CD8-positive, alpha-beta T cell (primary cell): ENCODE measurements at regions of chr22 and their contacts with region 1.

Region 1: DNA sequence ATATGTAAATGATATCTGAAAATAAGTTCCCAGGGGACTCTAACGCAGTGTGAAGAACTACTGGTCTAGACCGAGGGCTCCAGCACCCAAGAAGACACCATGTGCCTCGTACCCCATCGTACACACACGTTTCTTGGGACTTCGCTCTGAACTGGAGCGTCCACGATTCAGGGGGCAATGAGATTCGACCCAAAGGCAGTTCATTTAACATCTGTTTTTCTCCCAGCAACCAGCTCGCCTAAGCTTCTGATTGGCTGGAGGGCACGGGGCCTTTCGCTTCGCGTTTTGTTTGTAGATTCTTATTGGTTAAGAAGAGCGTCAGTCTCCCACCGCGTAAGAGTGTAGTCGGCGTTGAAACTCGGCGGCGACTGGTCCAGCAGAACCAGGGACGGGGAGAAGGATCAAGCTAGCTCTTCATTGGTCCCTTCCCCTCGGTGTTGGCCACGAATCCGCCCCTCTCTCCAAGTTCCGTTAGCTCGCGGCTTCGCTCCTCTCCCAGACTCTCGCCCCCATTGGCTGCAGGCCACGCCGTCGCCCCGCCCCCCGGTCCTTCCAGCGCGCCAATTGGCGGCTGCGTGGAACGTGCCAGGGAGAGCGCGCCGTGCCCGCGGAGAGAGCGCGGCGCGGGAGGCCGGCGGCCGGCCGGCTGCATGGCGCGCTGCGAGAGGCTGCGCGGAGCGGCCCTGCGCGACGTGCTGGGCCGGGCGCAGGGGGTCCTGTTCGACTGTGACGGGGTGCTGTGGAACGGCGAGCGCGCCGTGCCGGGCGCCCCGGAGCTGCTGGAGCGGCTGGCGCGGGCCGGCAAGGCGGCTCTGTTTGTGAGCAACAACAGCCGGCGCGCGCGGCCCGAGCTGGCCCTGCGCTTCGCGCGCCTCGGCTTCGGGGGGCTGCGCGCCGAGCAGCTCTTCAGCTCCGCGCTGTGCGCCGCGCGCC is at the start of gene PDXP:
- DNase-seq: peak; percentile 95 to 99 (median 99)
- ATAC-seq: peak; percentile 90
- H3K4me3 ChIP-seq: peak within 1 kb of the TSS; percentile 50 to 66
- H3K4me3 Mint-ChIP-seq: peak within 1 kb of the TSS; percentile 87
- H3K27ac ChIP-seq: peak within 1 kb of the TSS; percentile 8 to 76
- H3K27ac Mint-ChIP-seq: peak within 1 kb of the TSS; percentile 95
- H3K4me1 ChIP-seq: peaks cover 33% of the 10 kb centered on the region
- H3K4me1 Mint-ChIP-seq: peaks cover 37% of the 10 kb centered on the region
- H3K27me3 ChIP-seq: no peaks in the 10 kb centered on the region
- H3K27me3 Mint-ChIP-seq: no peaks in the 10 kb centered on the region
- CTCF ChIP-seq: no peak
- total RNA-seq, gene PDXP: 2.4 to 3.2 TPM

Region 2: GRCh38 chr22:37623075-37624016 is 35.1 kb before region 1 on chr22:
- CTCF ChIA-PET with region 1: interaction called, 2,176 read pairs
- POLR2A ChIA-PET with region 1: interaction called, 13 read pairs
- intact Hi-C with region 1: no loop called
- DNase-seq: peak; percentile 64 to 87 (median 79)
- ATAC-seq: peak; percentile 86
- H3K4me3 ChIP-seq: peak overlapping the region in 1 of 2 experiments; percentile 25
- H3K4me3 Mint-ChIP-seq: peak overlapping the region; percentile 68
- H3K27ac ChIP-seq: peak overlapping the region; percentile 29 to 58
- H3K27ac Mint-ChIP-seq: peak overlapping the region; percentile 95
- H3K4me1 ChIP-seq: peaks cover 53% of the 10 kb centered on the region
- H3K4me1 Mint-ChIP-seq: peaks cover 50% of the 10 kb centered on the region
- H3K27me3 ChIP-seq: no peaks in the 10 kb centered on the region
- H3K27me3 Mint-ChIP-seq: no peaks in the 10 kb centered on the region
- CTCF ChIP-seq: peak; percentile 86

Region 3: DNA sequence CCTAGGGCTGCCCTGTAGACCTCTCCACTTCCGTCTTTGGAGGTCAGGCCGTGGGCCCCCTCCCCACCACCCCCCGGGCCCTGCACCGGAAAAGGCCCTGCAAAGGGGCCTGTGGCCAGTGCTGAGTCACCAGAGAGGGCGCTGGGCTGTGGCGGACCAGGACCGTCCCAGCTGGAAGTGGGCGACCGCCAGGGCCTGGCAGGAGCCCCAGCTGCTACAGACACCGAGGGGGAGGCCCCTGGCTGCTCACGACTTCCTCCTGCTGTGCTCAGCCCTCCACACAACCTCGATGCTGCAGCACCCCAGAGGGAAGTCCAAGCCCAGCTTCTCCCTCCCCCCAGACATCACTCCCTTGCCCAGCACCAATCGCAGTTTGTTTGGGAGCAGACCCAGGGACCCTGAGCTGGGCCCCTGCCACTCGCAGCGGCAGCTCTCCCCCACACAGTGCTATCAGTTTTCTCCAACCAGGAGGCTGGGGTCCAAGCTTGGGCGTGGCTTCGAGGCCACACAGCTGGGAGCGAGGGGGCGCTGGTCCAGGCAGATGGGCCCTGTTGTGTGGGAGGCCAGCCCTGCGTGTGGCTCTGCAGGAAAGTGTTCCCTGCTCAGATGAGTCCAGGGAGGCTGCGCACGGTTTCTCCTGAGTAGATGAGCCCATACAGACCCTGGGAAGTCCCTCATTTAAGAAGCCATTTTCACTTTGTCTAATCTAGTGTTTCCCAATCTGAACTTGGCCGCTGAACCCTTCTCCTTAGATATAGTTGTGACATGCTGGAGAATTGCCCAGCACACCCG is 24.6 kb before region 1 on chr22:
- CTCF ChIA-PET with region 1: interaction called, 2,176 read pairs
- POLR2A ChIA-PET with region 1: interaction called, 53 read pairs
- intact Hi-C with region 1: no loop called
- DNase-seq: peak in 8 of 9 experiments; percentile 42 to 84 (median 64)
- ATAC-seq: peak; percentile 62
- H3K4me3 ChIP-seq: peak overlapping the region; percentile 34 to 40
- H3K4me3 Mint-ChIP-seq: peak overlapping the region; percentile 74
- H3K27ac ChIP-seq: peak overlapping the region; percentile 39 to 79
- H3K27ac Mint-ChIP-seq: peak overlapping the region; percentile 92
- H3K4me1 ChIP-seq: peaks cover 89% of the 10 kb centered on the region
- H3K4me1 Mint-ChIP-seq: peaks cover 78% of the 10 kb centered on the region
- H3K27me3 ChIP-seq: no peaks in the 10 kb centered on the region
- H3K27me3 Mint-ChIP-seq: no peaks in the 10 kb centered on the region
- CTCF ChIP-seq: no peak

Region 4: GRCh38 chr22:37643225-37643847 is 15.1 kb before region 1 on chr22:
- CTCF ChIA-PET with region 1: interaction called, 2,176 read pairs
- POLR2A ChIA-PET with region 1: interaction called, 53 read pairs
- intact Hi-C with region 1: loop called in 1 of 2 experiments (anchors 1 kb)
- DNase-seq: peak; percentile 78 to 93 (median 85)
- ATAC-seq: peak; percentile 62
- H3K4me3 ChIP-seq: no peak overlapping the region
- H3K4me3 Mint-ChIP-seq: peak overlapping the region; percentile 65
- H3K27ac ChIP-seq: peak overlapping the region; percentile 15 to 43
- H3K27ac Mint-ChIP-seq: peak overlapping the region; percentile 69
- H3K4me1 ChIP-seq: peaks cover 39% of the 10 kb centered on the region
- H3K4me1 Mint-ChIP-seq: peaks cover 42% of the 10 kb centered on the region
- H3K27me3 ChIP-seq: no peaks in the 10 kb centered on the region
- H3K27me3 Mint-ChIP-seq: no peaks in the 10 kb centered on the region
- CTCF ChIP-seq: peak; percentile 85

Region 5: GRCh38 chr22:37676736-37677492 is 18.5 kb after region 1 on chr22:
- CTCF ChIA-PET with region 1: interaction called, 323 read pairs
- POLR2A ChIA-PET with region 1: interaction called, 78 read pairs
- intact Hi-C with region 1: loop called (anchors 1 kb)
- DNase-seq: peak; percentile 85 to 96 (median 94)
- ATAC-seq: peak; percentile 89
- H3K4me3 ChIP-seq: peak overlapping the region; percentile 73 to 93
- H3K4me3 Mint-ChIP-seq: peak overlapping the region; percentile 95
- H3K27ac ChIP-seq: peak overlapping the region; percentile 91 to 95
- H3K27ac Mint-ChIP-seq: peak overlapping the region; percentile 100
- H3K4me1 ChIP-seq: peaks cover 50% of the 10 kb centered on the region
- H3K4me1 Mint-ChIP-seq: peaks cover 55% of the 10 kb centered on the region
- H3K27me3 ChIP-seq: no peaks in the 10 kb centered on the region
- H3K27me3 Mint-ChIP-seq: no peaks in the 10 kb centered on the region
- CTCF ChIP-seq: no peak

Region 6: GRCh38 chr22:37686002-37686982 is 27.9 kb after region 1 on chr22 and contains the start of gene NOL12:
- CTCF ChIA-PET with region 1: interaction called, 323 read pairs
- POLR2A ChIA-PET with region 1: interaction called, 37 read pairs
- intact Hi-C with region 1: loop called (anchors 1 kb)
- DNase-seq: peak; percentile 63 to 90 (median 74)
- ATAC-seq: peak; percentile 91
- H3K4me3 ChIP-seq: peak within 1 kb of the TSS; percentile 88 to 97
- H3K4me3 Mint-ChIP-seq: peak within 1 kb of the TSS; percentile 94
- H3K27ac ChIP-seq: peak within 1 kb of the TSS; percentile 79 to 87
- H3K27ac Mint-ChIP-seq: peak within 1 kb of the TSS; percentile 95
- H3K4me1 ChIP-seq: peaks cover 16% of the 10 kb centered on the region
- H3K4me1 Mint-ChIP-seq: peaks cover 28% of the 10 kb centered on the region
- H3K27me3 ChIP-seq: no peaks in the 10 kb centered on the region
- H3K27me3 Mint-ChIP-seq: no peaks in the 10 kb centered on the region
- CTCF ChIP-seq: no peak
- total RNA-seq, gene NOL12: 25.1 to 29.1 TPM

Region 7: GRCh38 chr22:37696657-37697537 is 38.5 kb after region 1 on chr22 and contains the start of gene TRIOBP:
- CTCF ChIA-PET with region 1: no interaction called
- POLR2A ChIA-PET with region 1: no interaction called
- intact Hi-C with region 1: loop called in 1 of 2 experiments (anchors 1 kb)
- DNase-seq: peak; percentile 62 to 94 (median 83)
- ATAC-seq: peak; percentile 99
- H3K4me3 ChIP-seq: no peak within 1 kb of the TSS
- H3K4me3 Mint-ChIP-seq: peak within 1 kb of the TSS; percentile 56
- H3K27ac ChIP-seq: no peak within 1 kb of the TSS
- H3K27ac Mint-ChIP-seq: no peak within 1 kb of the TSS
- H3K4me1 ChIP-seq: peaks cover 12% of the 10 kb centered on the region
- H3K4me1 Mint-ChIP-seq: peaks cover 13% of the 10 kb centered on the region
- H3K27me3 ChIP-seq: no peaks in the 10 kb centered on the region
- H3K27me3 Mint-ChIP-seq: no peaks in the 10 kb centered on the region
- CTCF ChIP-seq: peak; percentile 46
- total RNA-seq, gene TRIOBP: 7.3 to 7.4 TPM